OCI-LY7 (cell line): ENCODE measurements at regions of chr11 and their contacts with region 1.

Region 1: DNA sequence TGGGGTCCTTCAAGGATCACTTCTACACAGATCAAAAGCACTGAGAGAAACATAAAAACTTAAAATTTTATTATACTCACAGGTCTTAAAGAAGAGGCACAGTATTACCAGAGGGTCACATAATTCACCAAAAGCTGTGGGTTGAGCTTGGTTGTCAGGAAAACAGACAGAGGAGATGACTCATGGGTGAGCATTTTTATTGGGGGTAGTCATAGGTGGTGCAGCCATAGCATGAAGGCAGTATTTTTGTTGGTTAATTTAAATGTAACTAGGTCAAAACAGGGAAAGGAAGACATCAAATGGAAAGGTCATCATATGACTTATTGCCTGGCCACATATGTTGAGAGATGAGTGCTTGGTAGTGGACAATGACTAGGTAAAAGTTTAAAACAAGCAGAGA is 24.2 kb downstream of the OR5B17 start:
- DNase-seq: no peak
- H3K4me3 ChIP-seq: no peak overlapping the region
- H3K27ac ChIP-seq: no peak overlapping the region
- H3K4me1 ChIP-seq: no peaks in the 10 kb centered on the region
- CTCF ChIP-seq: no peak

Region 2: GRCh38 chr11:58222721-58223120 is 112.0 kb before region 1 on chr11:
- CTCF ChIA-PET with region 1: no interaction called
- POLR2A ChIA-PET with region 1: no interaction called
- intact Hi-C with region 1: no loop called
- DNase-seq: no peak
- H3K4me3 ChIP-seq: no peak overlapping the region
- H3K27ac ChIP-seq: no peak overlapping the region
- H3K4me1 ChIP-seq: no peaks in the 10 kb centered on the region
- CTCF ChIP-seq: no peak

Region 3: GRCh38 chr11:58276151-58276550 is 58.6 kb before region 1 on chr11:
- CTCF ChIA-PET with region 1: no interaction called
- POLR2A ChIA-PET with region 1: no interaction called
- intact Hi-C with region 1: no loop called
- DNase-seq: no peak
- H3K4me3 ChIP-seq: no peak overlapping the region
- H3K27ac ChIP-seq: no peak overlapping the region
- H3K4me1 ChIP-seq: no peaks in the 10 kb centered on the region
- CTCF ChIP-seq: no peak

Region 4: DNA sequence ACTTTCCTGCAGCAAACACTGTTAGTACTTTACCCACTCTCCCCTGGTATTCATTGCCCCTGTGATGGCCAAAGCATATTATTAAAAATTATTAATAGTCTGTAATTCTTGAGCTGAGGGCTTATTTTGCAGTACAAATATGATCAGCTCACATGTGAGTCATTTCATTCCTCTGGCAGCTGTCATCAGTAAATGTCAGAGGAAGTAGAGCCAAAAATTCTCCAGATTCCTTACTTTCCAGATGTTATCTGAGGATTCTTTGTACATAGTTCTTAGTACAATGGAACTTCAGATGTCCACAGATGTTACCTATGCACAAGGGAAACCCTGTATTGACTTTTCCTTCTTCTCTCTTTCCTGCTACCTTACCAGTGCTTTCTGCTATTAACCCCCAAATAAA is 59.5 kb after region 1 on chr11:
- CTCF ChIA-PET with region 1: no interaction called
- POLR2A ChIA-PET with region 1: no interaction called
- intact Hi-C with region 1: loop called (anchors 10 kb)
- DNase-seq: no peak
- H3K4me3 ChIP-seq: no peak overlapping the region
- H3K27ac ChIP-seq: no peak overlapping the region
- H3K4me1 ChIP-seq: no peaks in the 10 kb centered on the region
- CTCF ChIP-seq: no peak